ENCODE measurements at regions of chr2 and their contacts with region 1.

Region 1: GRCh38 chr2:197191177-197191939 is 119.2 kb downstream of the ANKRD44 start:
- DNase-seq: no peak
- ATAC-seq: peak; percentile 85
- H3K4me3 ChIP-seq: no peak overlapping the region
- H3K27ac ChIP-seq: no peak overlapping the region
- H3K4me1 ChIP-seq: peaks cover 12 to 29% of the 10 kb centered on the region in 2 donors
- H3K27me3 ChIP-seq: no peaks in the 10 kb centered on the region
- CTCF ChIP-seq: peak; percentile 61

Region 2: GRCh38 chr2:196592912-196593881 is 598.2 kb before region 1 on chr2:
- intact Hi-C with region 1: no loop called
- DNase-seq: peak in 3 of 4 donors; percentile 60 to 84 (median 74)
- ATAC-seq: peak; percentile 85
- H3K4me3 ChIP-seq: peak within 1 kb of the TSS; percentile 52 to 57
- H3K27ac ChIP-seq: peak within 1 kb of the TSS; percentile 44 to 65
- H3K4me1 ChIP-seq: peaks cover 0 to 18% of the 10 kb centered on the region in 2 donors
- H3K27me3 ChIP-seq: peaks cover 13 to 70% of the 10 kb centered on the region in 2 donors
- CTCF ChIP-seq: no peak

Region 3: GRCh38 chr2:197079832-197080555 is 111.4 kb before region 1 on chr2:
- intact Hi-C with region 1: no loop called
- DNase-seq: no peak
- ATAC-seq: no peak
- H3K4me3 ChIP-seq: no peak overlapping the region
- H3K27ac ChIP-seq: no peak overlapping the region
- H3K4me1 ChIP-seq: peaks cover 0 to 9% of the 10 kb centered on the region in 2 donors
- H3K27me3 ChIP-seq: no peaks in the 10 kb centered on the region
- CTCF ChIP-seq: no peak

Region 4: GRCh38 chr2:197309691-197310231 is 118.4 kb after region 1 on chr2:
- intact Hi-C with region 1: loop called in 1 of 2 experiments (anchors 10 kb)
- DNase-seq: peak in 3 of 4 donors; percentile 32 to 84 (median 52)
- ATAC-seq: peak; percentile 4
- H3K4me3 ChIP-seq: peak overlapping the region; percentile 47 to 75
- H3K27ac ChIP-seq: peak overlapping the region; percentile 77 to 96
- H3K4me1 ChIP-seq: peaks cover 11 to 61% of the 10 kb centered on the region in 2 donors
- H3K27me3 ChIP-seq: no peaks in the 10 kb centered on the region
- CTCF ChIP-seq: no peak